HCT116 (cell line): ENCODE measurements at regions of chr12 and their contacts with region 1.

Region 1: DNA sequence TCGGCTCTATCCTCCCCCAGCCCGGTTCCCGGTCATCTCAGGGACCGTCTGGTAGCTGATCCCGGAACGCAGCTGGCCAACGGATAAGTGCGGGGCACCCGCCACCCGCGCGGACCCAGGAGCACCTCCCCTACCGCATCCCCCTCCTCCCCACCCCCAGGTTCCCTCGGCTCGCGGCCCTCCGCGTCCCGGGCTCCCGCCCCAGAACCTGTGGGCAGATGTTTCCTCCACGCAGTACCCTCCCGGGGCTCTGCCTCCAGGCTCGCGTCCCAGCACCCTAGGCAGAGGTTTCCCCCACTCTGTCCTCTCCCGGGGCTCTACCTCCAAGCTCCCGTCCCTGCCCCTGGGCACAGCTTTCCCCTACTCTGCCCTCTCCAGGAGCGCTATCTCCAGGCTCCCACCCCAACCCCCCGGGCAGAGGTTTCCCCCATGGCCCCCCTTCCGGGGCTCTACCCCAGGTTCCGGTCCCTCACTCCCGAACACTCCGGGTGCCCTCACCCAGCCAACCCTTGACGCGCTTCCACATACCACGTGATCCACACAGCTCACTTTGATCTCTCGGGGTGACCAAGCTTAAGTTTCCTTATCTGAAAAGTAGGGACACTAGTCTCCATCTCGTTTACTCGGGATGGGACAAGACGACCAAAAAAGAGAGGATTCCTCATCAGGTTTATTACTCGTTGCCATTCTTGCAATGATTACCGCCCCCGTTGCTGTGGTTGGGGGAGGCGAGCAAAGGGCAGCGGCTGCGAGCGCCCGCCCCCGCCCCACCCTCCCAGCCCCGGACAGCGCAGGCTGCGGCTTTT is at the start of gene CCDC38:
- DNase-seq: peak; percentile 73
- ATAC-seq: peak; percentile 91
- H3K4me3 ChIP-seq: peak within 1 kb of the TSS; percentile 76 to 89
- H3K27ac ChIP-seq: peak within 1 kb of the TSS; percentile 80
- H3K4me1 ChIP-seq: peaks cover 4 to 8% of the 10 kb centered on the region in 2 experiments; a peak in 3 of 4 replicates
- H3K27me3 ChIP-seq: 0 out of 2 replicates have a peak, but pooled peaks cover 6% of the 10 kb centered on the region
- CTCF ChIP-seq: no peak
- POLR2A ChIP-seq: peak; percentile 26
- RAD21 ChIP-seq: no peak
- total RNA-seq, gene CCDC38: 0.27 TPM

Region 2: GRCh38 chr12:95953000-95953399 is 10.3 kb after region 1 on chr12:
- CTCF ChIA-PET with region 1: interaction called, 4 read pairs
- POLR2A ChIA-PET with region 1: interaction called, 11 read pairs
- RAD21 ChIA-PET with region 1: no interaction called
- intact Hi-C with region 1: no loop called
- DNase-seq: no peak
- ATAC-seq: no peak
- H3K4me3 ChIP-seq: no peak overlapping the region
- H3K27ac ChIP-seq: no peak overlapping the region
- H3K4me1 ChIP-seq: no peaks in the 10 kb centered on the region
- H3K27me3 ChIP-seq: no peaks in the 10 kb centered on the region
- CTCF ChIP-seq: no peak
- POLR2A ChIP-seq: no peak
- RAD21 ChIP-seq: no peak

Region 3: GRCh38 chr12:96035278-96036236 is 92.8 kb after region 1 on chr12 and contains the start of gene LTA4H:
- CTCF ChIA-PET with region 1: no interaction called
- POLR2A ChIA-PET with region 1: no interaction called
- RAD21 ChIA-PET with region 1: no interaction called
- intact Hi-C with region 1: no loop called
- DNase-seq: peak; percentile 98
- ATAC-seq: peak; percentile 94
- H3K4me3 ChIP-seq: peak within 1 kb of the TSS; percentile 83 to 89
- H3K27ac ChIP-seq: peak within 1 kb of the TSS; percentile 71
- H3K4me1 ChIP-seq: peaks cover 0 to 12% of the 10 kb centered on the region in 2 experiments; a peak in 3 of 4 replicates
- H3K27me3 ChIP-seq: no peaks in the 10 kb centered on the region
- CTCF ChIP-seq: no peak
- POLR2A ChIP-seq: peak; percentile 97
- RAD21 ChIP-seq: no peak
- total RNA-seq, gene LTA4H: 163 TPM